Naive thymus-derived CD4-positive, alpha-beta T cell (primary cell): ENCODE measurements at regions of chr14 and their contacts with region 1.

Region 1: DNA sequence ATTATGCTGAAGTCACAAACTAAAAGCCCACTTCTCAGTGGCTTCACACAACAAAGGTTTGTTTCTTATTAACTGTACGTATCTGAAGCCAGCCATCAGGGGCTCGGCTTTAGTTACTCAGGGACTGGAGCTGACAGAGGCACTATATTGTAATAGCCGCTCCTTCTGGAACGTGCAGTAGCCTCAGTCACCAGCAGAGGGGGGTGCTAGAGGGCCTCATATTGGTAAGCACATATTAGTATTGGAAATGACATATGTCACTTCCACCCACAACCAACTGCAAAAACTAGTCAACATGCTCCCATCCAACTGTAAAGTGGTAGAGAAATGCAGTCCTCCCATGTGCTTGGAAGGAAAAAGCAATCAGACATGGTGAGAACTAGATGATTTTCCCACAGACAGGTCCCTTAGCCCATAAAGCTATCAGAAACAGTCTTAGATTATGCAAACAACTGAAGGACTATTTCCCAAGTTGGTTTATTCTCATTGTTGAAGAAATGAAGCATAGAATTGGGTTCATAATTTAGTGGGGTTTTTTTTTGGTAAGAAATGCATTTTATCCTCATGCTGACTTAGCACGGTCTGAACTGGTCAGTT is 183.6 kb upstream of the G2E3 start:
- DNase-seq: peak; percentile 11 to 57 (median 47)
- ATAC-seq: peak; percentile 93
- H3K4me3 ChIP-seq: no peak overlapping the region
- H3K4me3 Mint-ChIP-seq: no peak overlapping the region
- H3K27ac ChIP-seq: no peak overlapping the region
- H3K27ac Mint-ChIP-seq: no peak overlapping the region
- H3K4me1 ChIP-seq: no peaks in the 10 kb centered on the region
- H3K4me1 Mint-ChIP-seq: no peaks in the 10 kb centered on the region
- H3K27me3 ChIP-seq: no peaks in the 10 kb centered on the region
- H3K27me3 Mint-ChIP-seq: peaks cover 0 to 24% (median 19%) of the 10 kb centered on the region in 5 donors

Region 2: DNA sequence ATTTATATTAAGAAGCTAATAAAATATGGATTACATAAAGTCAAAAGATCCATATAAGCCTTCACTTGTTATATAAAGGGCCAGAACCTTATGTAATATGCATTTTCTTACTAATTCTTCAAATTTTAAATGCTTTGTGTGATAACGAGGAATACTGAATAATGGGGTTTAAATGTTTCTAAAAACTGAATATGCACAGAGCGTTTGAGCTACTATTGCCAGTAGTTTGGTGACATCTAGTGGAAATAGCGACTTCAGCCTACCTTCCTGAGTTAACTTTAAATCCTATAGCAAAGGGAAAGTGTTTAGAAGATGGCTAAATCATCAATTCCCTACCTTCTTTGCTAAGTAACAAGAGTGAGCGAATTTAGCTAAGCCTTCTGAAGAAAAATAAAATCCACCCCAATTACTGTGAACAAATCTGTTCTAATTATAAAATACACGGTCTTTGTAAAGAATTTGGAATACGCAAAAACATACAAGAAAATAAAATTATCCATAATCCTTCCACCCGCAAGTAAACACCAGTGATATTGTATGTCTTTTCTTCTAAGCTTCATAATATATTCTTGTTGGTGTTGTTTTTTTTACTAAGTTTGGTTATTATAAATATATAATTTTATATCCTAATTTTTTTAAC is 68.1 kb after region 1 on chr14:
- CTCF ChIA-PET with region 1: no interaction called
- POLR2A ChIA-PET with region 1: no interaction called
- intact Hi-C with region 1: loop called in 1 of 2 experiments (anchors 2 kb)
- DNase-seq: no peak
- ATAC-seq: no peak
- H3K4me3 ChIP-seq: no peak overlapping the region
- H3K4me3 Mint-ChIP-seq: no peak overlapping the region
- H3K27ac ChIP-seq: no peak overlapping the region
- H3K27ac Mint-ChIP-seq: no peak overlapping the region
- H3K4me1 ChIP-seq: no peaks in the 10 kb centered on the region
- H3K4me1 Mint-ChIP-seq: no peaks in the 10 kb centered on the region
- H3K27me3 ChIP-seq: no peaks in the 10 kb centered on the region
- H3K27me3 Mint-ChIP-seq: peaks cover 0 to 24% (median 3%) of the 10 kb centered on the region in 5 donors

Region 3: DNA sequence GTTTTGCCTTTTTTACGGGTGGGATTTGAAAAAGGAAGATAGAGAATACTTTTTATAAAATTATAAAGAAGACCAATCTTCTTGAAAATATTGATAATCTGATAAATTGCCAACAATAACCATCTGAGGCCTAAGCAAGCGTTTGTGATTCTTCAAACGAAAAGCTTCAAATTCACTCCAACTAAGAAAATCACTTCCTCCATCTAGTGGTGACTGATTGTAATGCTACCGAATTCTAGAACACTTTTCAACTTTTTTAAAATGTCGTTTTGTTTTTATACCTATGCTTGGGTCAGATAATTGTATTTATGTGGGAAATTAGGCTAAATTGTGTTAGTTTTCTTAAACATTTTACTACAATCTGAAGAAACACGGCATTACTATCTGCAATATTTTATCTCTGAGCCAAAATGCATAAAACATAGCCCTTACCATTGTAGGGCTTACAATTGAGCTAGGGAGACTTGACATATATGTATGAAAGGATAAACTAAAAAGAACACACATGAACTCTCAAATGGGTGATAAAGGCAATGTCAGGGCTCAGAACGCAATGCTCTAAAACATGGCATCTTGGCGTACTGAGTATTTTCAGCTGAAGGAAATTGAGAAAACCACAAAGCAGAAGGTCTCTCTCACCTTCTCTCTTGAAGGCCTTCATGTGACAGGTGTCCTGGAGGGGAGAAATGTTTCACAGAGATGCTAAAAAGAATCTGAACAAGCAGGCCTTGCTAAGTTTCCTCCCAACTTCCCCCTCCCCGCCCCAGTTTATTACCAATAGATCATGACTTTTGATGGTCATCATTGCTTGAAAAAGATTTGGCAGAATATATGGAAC is 146.7 kb after region 1 on chr14:
- CTCF ChIA-PET with region 1: interaction called, 5 read pairs
- POLR2A ChIA-PET with region 1: no interaction called
- intact Hi-C with region 1: loop called (anchors 1 kb)
- DNase-seq: peak in 6 of 9 donors; percentile 4 to 55 (median 36)
- ATAC-seq: peak; percentile 70
- H3K4me3 ChIP-seq: no peak overlapping the region
- H3K4me3 Mint-ChIP-seq: peak overlapping the region in 7 of 10 donors; percentile 2 to 59 (median 26)
- H3K27ac ChIP-seq: no peak overlapping the region
- H3K27ac Mint-ChIP-seq: peak overlapping the region in 7 of 9 donors; percentile 6 to 78 (median 43)
- H3K4me1 ChIP-seq: peaks cover 4 to 7% of the 10 kb centered on the region in 2 donors
- H3K4me1 Mint-ChIP-seq: peaks cover 2 to 17% (median 11%) of the 10 kb centered on the region in 7 donors
- H3K27me3 ChIP-seq: no peaks in the 10 kb centered on the region
- H3K27me3 Mint-ChIP-seq: no peaks in the 10 kb centered on the region

Region 4: DNA sequence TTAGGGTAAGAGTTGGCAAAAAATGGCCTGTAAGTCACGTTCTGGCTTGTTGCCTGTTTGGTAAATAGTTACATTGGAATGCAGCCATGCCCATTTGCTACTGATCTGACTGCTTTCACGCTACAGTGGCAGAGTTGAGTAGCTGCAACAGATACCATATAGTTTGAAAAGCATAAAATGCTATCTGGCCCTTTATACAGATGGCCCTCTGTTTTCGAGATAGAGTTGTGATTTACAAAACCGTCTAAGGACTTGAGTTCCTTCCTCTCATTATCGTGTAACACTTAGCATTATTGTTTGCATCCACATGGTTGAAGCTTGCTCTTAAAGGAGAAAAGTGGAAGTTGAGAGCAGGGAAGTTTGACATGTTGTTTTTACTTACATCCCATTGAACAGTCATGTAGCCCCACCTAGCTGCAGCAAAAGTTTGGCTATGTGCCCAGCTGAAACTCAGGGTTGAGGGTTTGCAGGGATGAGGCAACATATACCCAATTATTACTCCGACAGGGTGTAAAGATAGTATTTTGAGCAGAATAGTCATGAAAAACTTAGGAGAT is 235.5 kb after region 1 on chr14:
- CTCF ChIA-PET with region 1: interaction called, 3 read pairs
- POLR2A ChIA-PET with region 1: no interaction called
- intact Hi-C with region 1: loop called in 1 of 2 experiments (anchors 1 kb)
- DNase-seq: peak in 5 of 9 donors; percentile 12 to 30 (median 21)
- ATAC-seq: peak; percentile 75
- H3K4me3 ChIP-seq: no peak overlapping the region
- H3K4me3 Mint-ChIP-seq: no peak overlapping the region
- H3K27ac ChIP-seq: no peak overlapping the region
- H3K27ac Mint-ChIP-seq: peak overlapping the region in 4 of 9 donors; percentile 9 to 42 (median 16)
- H3K4me1 ChIP-seq: no peaks in the 10 kb centered on the region
- H3K4me1 Mint-ChIP-seq: peaks cover 0 to 7% (median 0%) of the 10 kb centered on the region in 7 donors
- H3K27me3 ChIP-seq: no peaks in the 10 kb centered on the region
- H3K27me3 Mint-ChIP-seq: no peaks in the 10 kb centered on the region

Region 5: GRCh38 chr14:30906752-30907658 is 531.6 kb after region 1 on chr14:
- CTCF ChIA-PET with region 1: no interaction called
- POLR2A ChIA-PET with region 1: no interaction called
- intact Hi-C with region 1: loop called (anchors 5 to 10 kb)
- DNase-seq: peak in 2 of 9 donors; percentile 2 to 11
- ATAC-seq: no peak
- H3K4me3 ChIP-seq: no peak overlapping the region
- H3K4me3 Mint-ChIP-seq: no peak overlapping the region
- H3K27ac ChIP-seq: no peak overlapping the region
- H3K27ac Mint-ChIP-seq: no peak overlapping the region
- H3K4me1 ChIP-seq: no peaks in the 10 kb centered on the region
- H3K4me1 Mint-ChIP-seq: no peaks in the 10 kb centered on the region
- H3K27me3 ChIP-seq: no peaks in the 10 kb centered on the region
- H3K27me3 Mint-ChIP-seq: no peaks in the 10 kb centered on the region